A549 (cell line): ENCODE measurements at regions of chr17 and their contacts with region 1.

Region 1: GRCh38 chr17:78019367-78019975 is 61.0 kb downstream of the TNRC6C start:
- DNase-seq: peak in 1 of 2 experiments; percentile 53
- ATAC-seq: peak in 1 of 2 experiments; percentile 70; a peak in 3 of 6 replicates
- H3K4me3 ChIP-seq: no peak overlapping the region
- H3K27ac ChIP-seq: no peak overlapping the region
- H3K4me1 ChIP-seq: no peaks in the 10 kb centered on the region
- CTCF ChIP-seq: peak; percentile 86
- EP300 ChIP-seq: no peak
- POLR2A ChIP-seq: no peak
- RAD21 ChIP-seq: peak; percentile 77 to 82

Region 2: DNA sequence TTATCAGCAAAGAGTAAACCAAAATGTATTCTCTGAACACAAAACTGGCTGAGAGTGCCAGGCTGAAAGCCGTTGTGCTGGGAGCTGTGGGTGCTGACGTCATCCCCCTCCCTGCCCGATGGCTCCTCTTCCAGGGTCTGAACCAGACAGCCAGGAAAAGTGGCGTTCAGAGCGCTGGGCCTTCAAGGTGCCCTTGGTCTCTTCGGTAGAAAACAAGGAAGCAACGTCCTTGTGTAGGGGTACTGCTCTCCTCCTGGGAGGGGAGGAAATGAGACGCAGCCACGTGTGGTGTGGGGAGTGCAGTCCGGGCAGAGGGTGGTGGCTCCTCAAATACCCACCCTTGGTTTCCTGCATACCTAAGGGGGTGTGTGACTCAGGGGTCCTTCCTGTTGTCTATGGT is 484.0 kb before region 1 on chr17:
- CTCF ChIA-PET with region 1: interaction called, 316 read pairs
- POLR2A ChIA-PET with region 1: no interaction called
- DNase-seq: no peak
- ATAC-seq: no peak; a peak in 1 of 6 replicates
- H3K4me3 ChIP-seq: no peak overlapping the region
- H3K27ac ChIP-seq: no peak overlapping the region
- H3K4me1 ChIP-seq: peaks cover 5% of the 10 kb centered on the region; the same call in 1 of the 3 replicates
- CTCF ChIP-seq: no peak
- EP300 ChIP-seq: no peak
- POLR2A ChIP-seq: no peak
- RAD21 ChIP-seq: no peak

Region 3: GRCh38 chr17:77875881-77876509 is 143.5 kb before region 1 on chr17:
- CTCF ChIA-PET with region 1: no interaction called
- POLR2A ChIA-PET with region 1: no interaction called
- DNase-seq: peak; percentile 49 to 60
- ATAC-seq: peak; percentile 41 to 57; a peak in 4 of 6 replicates
- H3K4me3 ChIP-seq: no peak overlapping the region
- H3K27ac ChIP-seq: no peak overlapping the region
- H3K4me1 ChIP-seq: no peaks in the 10 kb centered on the region
- CTCF ChIP-seq: no peak
- EP300 ChIP-seq: no peak
- POLR2A ChIP-seq: no peak
- RAD21 ChIP-seq: no peak

Region 4: DNA sequence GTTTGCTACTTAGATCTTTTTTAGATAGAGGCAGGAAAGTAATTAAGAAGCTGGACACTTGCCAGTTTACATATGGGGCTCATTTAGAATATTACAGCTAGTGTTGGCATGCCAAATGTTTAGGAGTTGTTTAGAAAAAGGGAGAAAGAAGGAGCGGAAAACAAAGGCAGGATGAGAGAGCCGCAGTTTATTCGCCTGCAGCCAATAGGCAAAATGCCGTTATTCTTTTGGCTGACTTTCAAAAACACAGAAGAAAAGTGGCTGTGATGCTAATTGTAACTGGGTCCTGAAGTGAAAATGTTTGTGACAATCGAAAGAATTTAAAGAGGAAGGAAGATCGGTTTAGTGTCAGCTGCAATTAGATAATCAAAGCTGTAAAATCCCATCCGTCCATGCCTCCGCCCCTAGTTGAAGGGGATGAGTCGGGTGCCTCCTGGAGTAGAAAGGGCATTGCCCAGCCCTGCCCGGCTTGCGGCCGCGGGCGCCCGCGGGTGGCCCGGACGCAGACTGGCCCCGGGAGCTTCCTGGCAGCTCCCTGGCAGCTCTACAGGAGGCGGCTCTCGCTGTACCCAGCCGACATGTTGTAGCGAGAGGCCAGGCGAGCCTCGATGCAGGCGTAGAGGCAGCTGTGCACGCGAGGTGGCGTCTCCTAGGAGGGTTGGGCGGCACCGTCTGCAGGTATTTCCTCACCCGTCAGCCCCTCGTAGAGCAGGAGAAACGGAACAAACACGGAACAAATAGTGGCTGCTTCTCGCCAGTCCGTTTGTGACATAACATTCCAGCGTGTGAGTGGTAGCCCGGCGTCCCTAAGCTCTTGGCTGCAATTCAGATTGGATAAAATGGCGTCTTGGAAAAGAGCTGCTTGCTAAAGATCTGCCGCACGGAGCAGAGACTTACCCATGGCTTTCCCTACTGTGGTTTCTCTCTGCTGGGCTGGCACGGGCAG is 21.2 kb after region 1 on chr17:
- CTCF ChIA-PET with region 1: interaction called, 259 read pairs
- POLR2A ChIA-PET with region 1: interaction called, 4 read pairs
- DNase-seq: peak; percentile 66 to 81
- ATAC-seq: peak; percentile 97 to 98
- H3K4me3 ChIP-seq: peak overlapping the region; percentile 47
- H3K27ac ChIP-seq: peak overlapping the region; percentile 77 to 89
- H3K4me1 ChIP-seq: peaks cover 11% of the 10 kb centered on the region; the same call in 2 of the 3 replicates
- CTCF ChIP-seq: no peak
- EP300 ChIP-seq: no peak
- POLR2A ChIP-seq: peak; percentile 88
- RAD21 ChIP-seq: no peak

Region 5: DNA sequence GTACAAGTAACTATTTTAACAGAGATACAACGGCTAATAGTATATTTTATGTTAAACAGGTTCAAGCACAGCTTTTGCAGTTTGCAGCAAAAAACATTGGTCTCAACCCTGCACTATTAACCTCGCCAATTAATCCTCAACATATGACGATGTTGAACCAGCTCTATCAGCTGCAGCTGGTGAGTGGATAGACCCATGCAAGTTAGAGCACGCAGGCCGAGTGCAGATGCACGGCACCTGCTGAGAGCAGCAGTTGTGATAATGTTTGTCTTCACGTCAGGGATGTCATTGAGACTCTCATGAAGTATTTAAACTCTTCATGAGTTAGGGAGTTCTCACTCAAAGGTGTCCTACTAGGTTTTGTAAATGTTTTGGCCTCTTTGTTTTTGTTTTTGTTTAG is 63.5 kb after region 1 on chr17:
- CTCF ChIA-PET with region 1: interaction called, 17 read pairs
- POLR2A ChIA-PET with region 1: no interaction called
- DNase-seq: no peak
- ATAC-seq: no peak
- H3K4me3 ChIP-seq: no peak overlapping the region
- H3K27ac ChIP-seq: no peak overlapping the region
- H3K4me1 ChIP-seq: no peaks in the 10 kb centered on the region
- CTCF ChIP-seq: no peak
- EP300 ChIP-seq: no peak
- POLR2A ChIP-seq: no peak
- RAD21 ChIP-seq: no peak

Region 6: GRCh38 chr17:78096093-78096492 is 76.6 kb after region 1 on chr17:
- CTCF ChIA-PET with region 1: interaction called, 13 read pairs
- POLR2A ChIA-PET with region 1: no interaction called
- DNase-seq: no peak
- ATAC-seq: no peak; a peak in 1 of 6 replicates
- H3K4me3 ChIP-seq: no peak overlapping the region
- H3K27ac ChIP-seq: no peak overlapping the region
- H3K4me1 ChIP-seq: no peaks in the 10 kb centered on the region
- CTCF ChIP-seq: no peak
- EP300 ChIP-seq: no peak
- POLR2A ChIP-seq: no peak
- RAD21 ChIP-seq: no peak

Region 7: GRCh38 chr17:78133971-78134898 is 114.8 kb after region 1 on chr17:
- CTCF ChIA-PET with region 1: interaction called, 36 read pairs
- POLR2A ChIA-PET with region 1: no interaction called
- DNase-seq: peak; percentile 79 to 80
- ATAC-seq: peak; percentile 51 to 72
- H3K4me3 ChIP-seq: no peak overlapping the region
- H3K27ac ChIP-seq: no peak overlapping the region
- H3K4me1 ChIP-seq: 0 out of 3 replicates have a peak, but pooled peaks cover 2% of the 10 kb centered on the region
- CTCF ChIP-seq: peak; percentile 65
- EP300 ChIP-seq: no peak
- POLR2A ChIP-seq: no peak
- RAD21 ChIP-seq: peak; percentile 51 to 69